Right ventricle myocardium inferior (tissue), 1 donor: ENCODE measurements at regions of chr5 and their contacts with region 1.

Region 1: GRCh38 chr5:154103233-154103632 is 64.5 kb downstream of the MFAP3 start:
- DNase-seq: no peak
- ATAC-seq: peak; percentile 33

Region 2: GRCh38 chr5:154118893-154119336 is 15.7 kb after region 1 on chr5:
- intact Hi-C with region 1: loop called (anchors 1 kb)
- DNase-seq: no peak
- ATAC-seq: no peak

Region 3: DNA sequence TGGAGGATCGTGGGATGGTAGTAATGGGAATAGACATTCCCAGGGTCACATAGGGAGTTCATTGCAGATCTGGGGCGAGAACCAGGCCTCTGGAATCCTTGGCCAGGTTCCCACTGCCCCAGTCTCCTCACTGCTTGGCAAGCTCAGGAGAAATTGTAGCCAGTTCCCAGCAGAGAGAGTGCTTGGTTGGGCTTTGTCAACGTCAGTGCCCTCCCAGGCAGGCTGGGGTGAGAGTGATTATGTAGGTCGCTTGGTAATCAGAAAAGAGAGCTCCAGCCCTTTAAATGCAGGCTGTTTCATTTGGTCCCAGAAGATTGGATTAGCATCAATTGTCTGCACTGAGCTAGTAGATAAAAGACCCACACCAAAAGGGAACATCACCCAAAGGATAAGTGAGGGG is 35.5 kb after region 1 on chr5:
- intact Hi-C with region 1: loop called (anchors 5 kb)
- DNase-seq: peak; percentile 72
- ATAC-seq: peak; percentile 90